IMR-90 (cell line): ENCODE measurements at regions of chr19 and their contacts with region 1.

Region 1: GRCh38 chr19:4909897-4910593 is 744 bp downstream of the UHRF1 start:
- DNase-seq: peak; percentile 79
- ATAC-seq: peak; percentile 79
- H3K4me3 ChIP-seq: peak overlapping the region; percentile 87
- H3K27ac ChIP-seq: peak overlapping the region; percentile 91
- H3K4me1 ChIP-seq: peaks cover 28% of the 10 kb centered on the region
- H3K27me3 ChIP-seq: no peaks in the 10 kb centered on the region
- CTCF ChIP-seq: no peak
- POLR2A ChIP-seq: no peak
- RAD21 ChIP-seq: no peak

Region 2: GRCh38 chr19:4803736-4804695 is 106.0 kb before region 1 on chr19:
- CTCF ChIA-PET with region 1: interaction called, 30 read pairs
- POLR2A ChIA-PET with region 1: no interaction called
- dilution Hi-C with region 1: no loop called
- in situ Hi-C with region 1: loop called (anchors 5 kb)
- intact Hi-C with region 1: loop called (anchors 1 kb)
- DNase-seq: peak; percentile 37
- ATAC-seq: peak; percentile 93
- H3K4me3 ChIP-seq: no peak overlapping the region
- H3K27ac ChIP-seq: no peak overlapping the region
- H3K4me1 ChIP-seq: no peaks in the 10 kb centered on the region
- H3K27me3 ChIP-seq: no peaks in the 10 kb centered on the region
- CTCF ChIP-seq: peak; percentile 91
- POLR2A ChIP-seq: no peak
- RAD21 ChIP-seq: peak; percentile 73

Region 3: GRCh38 chr19:4968462-4969291 is 58.6 kb after region 1 on chr19 and contains the start of gene KDM4B:
- CTCF ChIA-PET with region 1: interaction called, 3 read pairs
- POLR2A ChIA-PET with region 1: interaction called, 3 read pairs
- dilution Hi-C with region 1: no loop called
- in situ Hi-C with region 1: no loop called
- intact Hi-C with region 1: loop called (anchors 2 kb)
- DNase-seq: peak; percentile 99
- ATAC-seq: peak; percentile 93
- H3K4me3 ChIP-seq: peak within 1 kb of the TSS; percentile 73
- H3K27ac ChIP-seq: peak within 1 kb of the TSS; percentile 90
- H3K4me1 ChIP-seq: peaks cover 20% of the 10 kb centered on the region
- H3K27me3 ChIP-seq: no peaks in the 10 kb centered on the region
- CTCF ChIP-seq: no peak
- POLR2A ChIP-seq: peak; percentile 99
- RAD21 ChIP-seq: no peak
- total RNA-seq, gene KDM4B: 5.0 TPM in 2 replicates